ENCODE measurements at regions of chr22 and their contacts with region 1.

Region 1: GRCh38 chr22:27885977-27886842 is 32.8 kb downstream of the PITPNB start:
- DNase-seq: peak in 1 of 2 experiments; percentile 48
- H3K4me3 ChIP-seq: no peak overlapping the region
- H3K4me3 Mint-ChIP-seq: no peak overlapping the region
- H3K27ac Mint-ChIP-seq: no peak overlapping the region
- H3K4me1 ChIP-seq: peaks cover 5% of the 10 kb centered on the region; the same call in 1 of the 2 replicates
- H3K4me1 Mint-ChIP-seq: peaks cover 23% of the 10 kb centered on the region
- H3K27me3 ChIP-seq: no peaks in the 10 kb centered on the region
- H3K27me3 Mint-ChIP-seq: no peaks in the 10 kb centered on the region
- CTCF ChIP-seq: peak; percentile 63 to 71

Region 2: DNA sequence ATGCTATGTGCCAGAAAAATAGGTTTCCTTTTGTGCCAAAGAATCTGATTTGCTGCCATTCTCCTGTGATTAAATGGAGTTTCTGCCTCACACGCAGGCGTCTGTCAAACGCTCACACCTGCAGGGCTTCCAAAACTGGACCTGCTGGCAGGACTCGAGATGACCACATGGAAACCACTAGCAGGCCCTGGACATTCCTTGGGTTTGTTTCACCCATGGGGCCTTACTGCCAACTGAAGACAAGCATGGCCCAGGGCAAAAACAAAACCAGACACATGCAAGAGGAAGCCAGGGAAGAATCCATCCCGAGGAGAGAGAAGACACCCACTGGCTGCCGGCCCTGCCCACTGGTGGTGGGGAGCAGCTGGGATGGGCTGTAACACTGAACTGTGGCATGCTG is 28.8 kb before region 1 on chr22:
- CTCF ChIA-PET with region 1: interaction called, 10 read pairs
- POLR2A ChIA-PET with region 1: no interaction called
- intact Hi-C with region 1: no loop called
- DNase-seq: no peak
- H3K4me3 ChIP-seq: no peak overlapping the region
- H3K4me3 Mint-ChIP-seq: no peak overlapping the region
- H3K27ac Mint-ChIP-seq: no peak overlapping the region
- H3K4me1 ChIP-seq: peaks cover 12% of the 10 kb centered on the region; the same call in 1 of the 2 replicates
- H3K4me1 Mint-ChIP-seq: peaks cover 11% of the 10 kb centered on the region
- H3K27me3 ChIP-seq: no peaks in the 10 kb centered on the region
- H3K27me3 Mint-ChIP-seq: no peaks in the 10 kb centered on the region
- CTCF ChIP-seq: no peak

Region 3: GRCh38 chr22:28009272-28009827 is 123.1 kb after region 1 on chr22:
- CTCF ChIA-PET with region 1: interaction called, 7 read pairs
- POLR2A ChIA-PET with region 1: no interaction called
- intact Hi-C with region 1: loop called (anchors 1 kb)
- DNase-seq: peak; percentile 82 to 84
- H3K4me3 ChIP-seq: no peak overlapping the region
- H3K4me3 Mint-ChIP-seq: no peak overlapping the region
- H3K27ac Mint-ChIP-seq: no peak overlapping the region
- H3K4me1 ChIP-seq: peaks cover 11% of the 10 kb centered on the region
- H3K4me1 Mint-ChIP-seq: no peaks in the 10 kb centered on the region
- H3K27me3 ChIP-seq: no peaks in the 10 kb centered on the region
- H3K27me3 Mint-ChIP-seq: no peaks in the 10 kb centered on the region
- CTCF ChIP-seq: peak; percentile 90 to 95

Region 4: DNA sequence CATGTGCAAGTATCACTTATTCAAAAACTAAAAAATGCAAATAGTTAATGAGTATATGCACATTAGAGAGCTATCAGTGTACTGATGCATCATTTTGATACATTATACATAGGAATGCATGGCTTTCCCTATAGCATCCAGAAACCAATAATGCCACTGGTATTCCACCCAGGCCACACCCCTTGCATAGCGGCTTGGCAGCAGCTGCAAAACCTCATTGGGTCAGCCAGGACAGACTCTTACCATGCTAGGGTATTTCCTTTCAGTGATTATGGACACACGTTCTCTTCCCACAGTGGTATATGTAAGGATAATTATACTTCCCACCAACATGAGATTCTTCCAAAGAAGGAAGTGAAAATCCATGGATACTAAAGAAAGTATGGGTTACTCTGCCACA is 178.7 kb after region 1 on chr22:
- CTCF ChIA-PET with region 1: no interaction called
- POLR2A ChIA-PET with region 1: no interaction called
- intact Hi-C with region 1: no loop called
- DNase-seq: no peak
- H3K4me3 ChIP-seq: no peak overlapping the region
- H3K4me3 Mint-ChIP-seq: no peak overlapping the region
- H3K27ac Mint-ChIP-seq: no peak overlapping the region
- H3K4me1 ChIP-seq: no peaks in the 10 kb centered on the region
- H3K4me1 Mint-ChIP-seq: peaks cover 7% of the 10 kb centered on the region
- H3K27me3 ChIP-seq: no peaks in the 10 kb centered on the region
- H3K27me3 Mint-ChIP-seq: peaks cover 11% of the 10 kb centered on the region
- CTCF ChIP-seq: no peak